ENCODE measurements at regions of chr1 and their contacts with region 1.

Region 1: GRCh38 chr1:222124602-222125001 is 382.7 kb upstream of the DUSP10 start:
- DNase-seq: no peak
- H3K4me3 ChIP-seq: no peak overlapping the region
- H3K4me3 Mint-ChIP-seq: no peak overlapping the region
- H3K27ac Mint-ChIP-seq: no peak overlapping the region
- H3K4me1 ChIP-seq: no peaks in the 10 kb centered on the region
- H3K4me1 Mint-ChIP-seq: peaks cover 6% of the 10 kb centered on the region
- H3K27me3 ChIP-seq: no peaks in the 10 kb centered on the region
- H3K27me3 Mint-ChIP-seq: peaks cover 5% of the 10 kb centered on the region
- CTCF ChIP-seq: peak in 1 of 2 experiments; percentile 31

Region 2: GRCh38 chr1:222171005-222171404 is 46.4 kb after region 1 on chr1:
- CTCF ChIA-PET with region 1: no interaction called
- POLR2A ChIA-PET with region 1: no interaction called
- intact Hi-C with region 1: loop called (anchors 1 kb)
- DNase-seq: peak in 1 of 2 experiments; percentile 4
- H3K4me3 ChIP-seq: no peak overlapping the region
- H3K4me3 Mint-ChIP-seq: no peak overlapping the region
- H3K27ac Mint-ChIP-seq: no peak overlapping the region
- H3K4me1 ChIP-seq: no peaks in the 10 kb centered on the region
- H3K4me1 Mint-ChIP-seq: no peaks in the 10 kb centered on the region
- H3K27me3 ChIP-seq: no peaks in the 10 kb centered on the region
- H3K27me3 Mint-ChIP-seq: peaks cover 2% of the 10 kb centered on the region
- CTCF ChIP-seq: peak; percentile 34 to 52

Measured in Caco-2 (cell line).